ENCODE measurements at regions of chr13 and their contacts with region 1.

Region 1: GRCh38 chr13:76886292-76887075 is at the start of gene KCTD12:
- DNase-seq: peak; percentile 67
- ATAC-seq: peak; percentile 74
- H3K4me3 ChIP-seq: peak within 1 kb of the TSS; percentile 80
- H3K27ac ChIP-seq: peak within 1 kb of the TSS; percentile 34; the same call in 1 of the 2 replicates
- H3K4me1 ChIP-seq: peaks cover 14% of the 10 kb centered on the region; the same call in 1 of the 2 replicates
- H3K27me3 ChIP-seq: no peaks in the 10 kb centered on the region
- CTCF ChIP-seq: 0 out of 2 replicates have a peak, but pooled peaks have one; percentile 10
- total RNA-seq, gene KCTD12: 7.0 and 7.8 TPM in 2 replicates

Region 2: GRCh38 chr13:77002590-77003190 is 116.2 kb after region 1 on chr13:
- CTCF ChIA-PET with region 1: no interaction called
- POLR2A ChIA-PET with region 1: no interaction called
- intact Hi-C with region 1: loop called (anchors 1 kb)
- DNase-seq: peak; percentile 53
- ATAC-seq: peak; percentile 25
- H3K4me3 ChIP-seq: no peak overlapping the region
- H3K27ac ChIP-seq: no peak overlapping the region
- H3K4me1 ChIP-seq: peaks cover 15% of the 10 kb centered on the region
- H3K27me3 ChIP-seq: no peaks in the 10 kb centered on the region
- CTCF ChIP-seq: peak; percentile 74

Measured in PC-3 (cell line).